Activated B cell treated with CpG ODN at 0.5 μM for 24 hours (primary cell): ENCODE measurements at regions of chr6 and their contacts with region 1.

Region 1: GRCh38 chr6:26122793-26123674 is 35.8 kb downstream of the HFE start:
- DNase-seq: peak; percentile 68
- ATAC-seq: peak; percentile 60
- H3K4me3 Mint-ChIP-seq: peak overlapping the region; percentile 94
- H3K27ac Mint-ChIP-seq: peak overlapping the region; percentile 99
- H3K4me1 Mint-ChIP-seq: peaks cover 34% of the 10 kb centered on the region
- H3K27me3 Mint-ChIP-seq: no peaks in the 10 kb centered on the region
- CTCF ChIP-seq: no peak

Region 2: GRCh38 chr6:25682324-25682723 is 440.7 kb before region 1 on chr6:
- CTCF ChIA-PET with region 1: no interaction called
- POLR2A ChIA-PET with region 1: no interaction called
- intact Hi-C with region 1: no loop called
- DNase-seq: no peak
- ATAC-seq: no peak
- H3K4me3 Mint-ChIP-seq: no peak overlapping the region
- H3K27ac Mint-ChIP-seq: no peak overlapping the region
- H3K4me1 Mint-ChIP-seq: no peaks in the 10 kb centered on the region
- H3K27me3 Mint-ChIP-seq: peaks cover 33% of the 10 kb centered on the region
- CTCF ChIP-seq: no peak

Region 3: DNA sequence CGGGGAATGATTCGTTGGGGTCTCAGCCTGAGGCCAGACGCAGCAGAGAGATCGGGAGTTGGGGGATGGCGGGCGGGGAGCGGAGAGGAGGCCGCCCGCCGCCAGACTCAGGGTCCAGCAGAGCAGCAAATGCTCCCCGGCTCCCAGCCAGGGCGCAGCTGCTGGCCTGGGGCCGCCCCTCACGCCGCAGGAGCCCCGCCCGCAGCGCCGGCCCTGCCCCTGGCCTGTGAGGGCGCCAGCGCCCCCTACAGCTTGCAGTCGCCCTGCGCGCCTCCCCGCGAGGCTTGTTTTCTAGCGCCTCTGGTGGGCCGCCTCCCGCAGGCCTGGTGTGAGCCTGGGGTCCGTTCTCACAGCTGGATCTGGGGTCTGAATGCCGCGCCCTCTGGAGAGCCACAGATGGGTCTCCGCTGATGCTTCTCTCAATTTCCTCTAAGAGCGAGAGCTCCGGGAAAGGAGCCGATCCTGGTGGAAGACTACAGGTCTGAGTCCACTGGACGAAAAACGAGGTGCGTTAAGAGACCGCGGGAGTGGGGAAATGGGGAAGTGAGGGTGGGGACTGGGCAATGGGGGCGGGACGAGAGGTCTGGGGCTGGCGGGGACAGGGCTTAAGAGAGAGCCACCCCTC is 130.5 kb before region 1 on chr6:
- CTCF ChIA-PET with region 1: no interaction called
- POLR2A ChIA-PET with region 1: interaction called, 11 read pairs
- intact Hi-C with region 1: no loop called
- DNase-seq: peak; percentile 99
- ATAC-seq: peak; percentile 89
- H3K4me3 Mint-ChIP-seq: peak overlapping the region; percentile 99
- H3K27ac Mint-ChIP-seq: peak overlapping the region; percentile 99
- H3K4me1 Mint-ChIP-seq: peaks cover 50% of the 10 kb centered on the region
- H3K27me3 Mint-ChIP-seq: no peaks in the 10 kb centered on the region
- CTCF ChIP-seq: peak; percentile 73

Region 4: GRCh38 chr6:26065952-26066380 is 57.1 kb before region 1 on chr6:
- CTCF ChIA-PET with region 1: no interaction called
- POLR2A ChIA-PET with region 1: interaction called, 188 read pairs
- intact Hi-C with region 1: loop called (anchors 1 kb)
- DNase-seq: no peak
- ATAC-seq: peak; percentile 97
- H3K4me3 Mint-ChIP-seq: no peak overlapping the region
- H3K27ac Mint-ChIP-seq: peak overlapping the region; percentile 35
- H3K4me1 Mint-ChIP-seq: peaks cover 8% of the 10 kb centered on the region
- H3K27me3 Mint-ChIP-seq: peaks cover 3% of the 10 kb centered on the region
- CTCF ChIP-seq: peak; percentile 39

Region 5: GRCh38 chr6:26141378-26141904 is 18.4 kb after region 1 on chr6:
- CTCF ChIA-PET with region 1: interaction called, 5 read pairs
- POLR2A ChIA-PET with region 1: interaction called, 70 read pairs
- intact Hi-C with region 1: loop called (anchors 2 kb)
- DNase-seq: no peak
- ATAC-seq: no peak
- H3K4me3 Mint-ChIP-seq: no peak overlapping the region
- H3K27ac Mint-ChIP-seq: no peak overlapping the region
- H3K4me1 Mint-ChIP-seq: peaks cover 7% of the 10 kb centered on the region
- H3K27me3 Mint-ChIP-seq: no peaks in the 10 kb centered on the region
- CTCF ChIP-seq: no peak

Region 6: GRCh38 chr6:26216356-26216885 is 93.4 kb after region 1 on chr6:
- CTCF ChIA-PET with region 1: no interaction called
- POLR2A ChIA-PET with region 1: interaction called, 144 read pairs
- intact Hi-C with region 1: loop called (anchors 1 kb)
- DNase-seq: peak; percentile 62
- ATAC-seq: peak; percentile 78
- H3K4me3 Mint-ChIP-seq: no peak overlapping the region
- H3K27ac Mint-ChIP-seq: no peak overlapping the region
- H3K4me1 Mint-ChIP-seq: peaks cover 12% of the 10 kb centered on the region
- H3K27me3 Mint-ChIP-seq: no peaks in the 10 kb centered on the region
- CTCF ChIP-seq: no peak

Region 7: DNA sequence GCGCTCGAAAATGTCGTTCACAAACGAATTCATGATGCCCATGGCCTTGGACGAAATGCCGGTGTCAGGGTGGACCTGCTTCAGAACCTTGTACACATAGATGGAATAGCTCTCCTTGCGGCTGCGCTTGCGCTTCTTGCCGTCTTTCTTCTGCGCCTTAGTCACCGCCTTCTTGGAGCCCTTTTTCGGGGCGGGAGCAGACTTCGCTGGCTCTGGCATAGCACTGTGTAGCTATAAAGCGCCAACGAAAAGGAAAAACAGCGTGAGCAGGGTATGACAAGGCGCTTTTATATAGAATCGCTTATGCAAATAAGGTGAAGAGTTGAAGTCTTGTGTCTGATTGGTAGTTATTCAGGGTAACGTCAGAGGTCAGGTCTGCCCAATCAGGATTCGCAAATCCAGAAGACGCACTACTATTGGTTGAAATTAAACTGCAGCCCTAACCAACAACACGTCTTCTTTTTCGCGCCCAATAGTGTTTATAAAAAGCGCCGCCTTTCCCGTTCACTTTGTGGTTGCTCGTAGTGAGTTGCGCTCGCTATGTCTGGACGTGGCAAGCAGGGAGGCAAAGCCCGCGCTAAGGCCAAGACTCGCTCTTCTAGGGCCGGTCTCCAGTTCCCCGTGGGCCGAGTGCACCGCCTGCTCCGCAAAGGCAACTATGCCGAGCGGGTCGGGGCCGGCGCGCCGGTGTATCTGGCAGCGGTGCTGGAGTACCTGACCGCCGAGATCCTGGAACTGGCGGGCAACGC is 1009.7 kb after region 1 on chr6:
- CTCF ChIA-PET with region 1: no interaction called
- POLR2A ChIA-PET with region 1: interaction called, 59 read pairs
- intact Hi-C with region 1: loop called (anchors 1 kb)
- DNase-seq: peak; percentile 77
- ATAC-seq: peak; percentile 84
- H3K4me3 Mint-ChIP-seq: no peak overlapping the region
- H3K27ac Mint-ChIP-seq: no peak overlapping the region
- H3K4me1 Mint-ChIP-seq: peaks cover 14% of the 10 kb centered on the region
- H3K27me3 Mint-ChIP-seq: no peaks in the 10 kb centered on the region
- CTCF ChIP-seq: no peak

Region 8: DNA sequence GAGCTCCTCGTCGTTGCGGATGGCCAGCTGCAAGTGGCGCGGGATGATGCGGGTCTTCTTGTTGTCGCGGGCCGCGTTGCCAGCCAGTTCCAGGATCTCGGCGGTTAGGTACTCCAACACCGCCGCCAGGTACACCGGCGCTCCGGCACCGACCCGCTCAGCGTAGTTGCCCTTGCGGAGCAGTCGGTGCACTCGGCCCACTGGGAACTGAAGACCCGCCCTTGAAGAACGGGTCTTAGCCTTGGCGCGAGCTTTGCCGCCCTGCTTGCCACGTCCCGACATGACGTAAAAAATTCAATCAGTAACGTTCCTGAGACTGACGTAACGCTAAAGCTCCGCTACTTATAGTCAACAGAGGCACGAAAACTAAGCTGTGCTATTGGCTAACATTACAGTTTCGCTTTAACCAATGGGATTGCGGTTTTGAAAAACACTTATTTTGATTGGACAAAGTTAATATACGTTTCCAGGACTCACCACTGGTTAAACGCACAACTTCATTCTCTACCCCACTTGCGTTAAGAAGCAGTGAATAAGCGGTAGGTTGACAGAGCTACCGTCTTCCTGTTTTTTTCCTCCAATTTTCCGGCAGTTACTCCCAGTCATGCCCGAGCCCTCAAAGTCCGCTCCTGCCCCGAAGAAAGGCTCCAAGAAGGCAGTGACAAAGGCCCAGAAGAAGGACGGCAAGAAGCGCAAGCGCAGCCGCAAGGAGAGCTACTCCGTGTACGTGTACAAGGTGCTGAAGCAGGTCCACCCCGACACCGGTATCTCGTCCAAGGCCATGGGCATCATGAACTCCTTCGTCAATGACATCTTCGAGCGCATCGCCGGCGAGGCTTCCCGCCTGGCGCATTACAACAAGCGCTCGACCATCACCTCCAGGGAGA is 1715.3 kb after region 1 on chr6:
- CTCF ChIA-PET with region 1: no interaction called
- POLR2A ChIA-PET with region 1: interaction called, 49 read pairs
- intact Hi-C with region 1: no loop called
- DNase-seq: peak; percentile 73
- ATAC-seq: peak; percentile 76
- H3K4me3 Mint-ChIP-seq: no peak overlapping the region
- H3K27ac Mint-ChIP-seq: no peak overlapping the region
- H3K4me1 Mint-ChIP-seq: peaks cover 18% of the 10 kb centered on the region
- H3K27me3 Mint-ChIP-seq: no peaks in the 10 kb centered on the region
- CTCF ChIP-seq: no peak